Activated CD4-positive, alpha-beta T cell treated with anti-CD3 and anti-CD28 coated beads for 36 hours (primary cell): ENCODE measurements at regions of chr3 and their contacts with region 1.

Region 1: GRCh38 chr3:58433400-58434169 is at the start of gene PDHB:
- DNase-seq: peak; percentile 93
- ATAC-seq: peak; percentile 96
- H3K4me3 Mint-ChIP-seq: peak within 1 kb of the TSS; percentile 85
- H3K27ac Mint-ChIP-seq: peak within 1 kb of the TSS; percentile 96
- H3K4me1 Mint-ChIP-seq: peaks cover 24% of the 10 kb centered on the region
- H3K27me3 Mint-ChIP-seq: no peaks in the 10 kb centered on the region
- total RNA-seq, gene PDHB: 42.7 to 50.7 TPM

Region 2: DNA sequence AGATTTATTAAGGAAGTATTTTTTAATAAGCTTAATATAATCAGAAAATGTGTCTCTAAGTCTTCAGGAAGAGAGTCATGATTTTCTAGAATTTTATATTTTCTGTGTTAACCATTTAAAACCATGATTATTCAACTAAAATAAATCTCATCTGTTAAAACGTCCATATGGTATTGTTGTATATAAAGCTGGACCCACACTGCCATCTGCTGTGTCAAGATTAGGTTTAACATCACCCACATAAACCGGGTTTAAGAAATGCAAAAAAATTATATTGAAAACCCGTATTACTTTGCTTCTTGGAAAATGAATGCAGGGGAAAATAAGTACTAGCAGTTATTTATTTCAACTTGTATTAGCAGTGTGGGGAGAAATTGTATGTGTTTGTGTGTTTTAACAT is 1886.1 kb before region 1 on chr3:
- CTCF ChIA-PET with region 1: no interaction called
- POLR2A ChIA-PET with region 1: no interaction called
- intact Hi-C with region 1: no loop called
- DNase-seq: no peak
- ATAC-seq: no peak
- H3K4me3 Mint-ChIP-seq: no peak overlapping the region
- H3K27ac Mint-ChIP-seq: no peak overlapping the region
- H3K4me1 Mint-ChIP-seq: no peaks in the 10 kb centered on the region
- H3K27me3 Mint-ChIP-seq: peaks cover 7% of the 10 kb centered on the region

Region 3: GRCh38 chr3:57555738-57556458 is 877.7 kb before region 1 on chr3 and contains the start of gene PDE12:
- CTCF ChIA-PET with region 1: no interaction called
- POLR2A ChIA-PET with region 1: no interaction called
- intact Hi-C with region 1: loop called in 1 of 2 experiments (anchors 5 kb)
- DNase-seq: peak; percentile 91
- ATAC-seq: peak; percentile 82
- H3K4me3 Mint-ChIP-seq: peak within 1 kb of the TSS; percentile 91
- H3K27ac Mint-ChIP-seq: peak within 1 kb of the TSS; percentile 100
- H3K4me1 Mint-ChIP-seq: peaks cover 29% of the 10 kb centered on the region
- H3K27me3 Mint-ChIP-seq: no peaks in the 10 kb centered on the region
- total RNA-seq, gene PDE12: 19.2 to 19.9 TPM

Region 4: DNA sequence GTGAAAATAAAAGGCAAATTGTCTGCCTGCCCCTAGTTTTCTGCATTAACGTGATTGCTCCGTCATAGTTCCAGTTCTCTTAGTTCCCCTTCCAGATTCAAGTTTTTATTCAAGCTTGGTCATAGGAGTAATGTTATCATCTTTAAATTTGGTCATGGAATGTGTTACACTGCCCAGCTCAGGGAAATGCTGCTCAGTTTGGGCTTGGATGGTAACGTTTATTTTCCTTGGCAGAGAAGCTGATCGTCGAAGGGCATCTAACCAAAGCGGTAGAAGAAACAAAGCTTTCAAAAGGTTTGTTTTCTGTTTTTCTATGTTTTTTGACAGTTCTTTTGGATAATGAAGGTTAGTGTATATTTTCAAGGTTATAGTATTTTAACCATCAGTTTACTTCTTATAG is 543.8 kb before region 1 on chr3:
- CTCF ChIA-PET with region 1: no interaction called
- POLR2A ChIA-PET with region 1: no interaction called
- intact Hi-C with region 1: no loop called
- DNase-seq: no peak
- ATAC-seq: no peak
- H3K4me3 Mint-ChIP-seq: no peak overlapping the region
- H3K27ac Mint-ChIP-seq: no peak overlapping the region
- H3K4me1 Mint-ChIP-seq: no peaks in the 10 kb centered on the region
- H3K27me3 Mint-ChIP-seq: no peaks in the 10 kb centered on the region

Region 5: DNA sequence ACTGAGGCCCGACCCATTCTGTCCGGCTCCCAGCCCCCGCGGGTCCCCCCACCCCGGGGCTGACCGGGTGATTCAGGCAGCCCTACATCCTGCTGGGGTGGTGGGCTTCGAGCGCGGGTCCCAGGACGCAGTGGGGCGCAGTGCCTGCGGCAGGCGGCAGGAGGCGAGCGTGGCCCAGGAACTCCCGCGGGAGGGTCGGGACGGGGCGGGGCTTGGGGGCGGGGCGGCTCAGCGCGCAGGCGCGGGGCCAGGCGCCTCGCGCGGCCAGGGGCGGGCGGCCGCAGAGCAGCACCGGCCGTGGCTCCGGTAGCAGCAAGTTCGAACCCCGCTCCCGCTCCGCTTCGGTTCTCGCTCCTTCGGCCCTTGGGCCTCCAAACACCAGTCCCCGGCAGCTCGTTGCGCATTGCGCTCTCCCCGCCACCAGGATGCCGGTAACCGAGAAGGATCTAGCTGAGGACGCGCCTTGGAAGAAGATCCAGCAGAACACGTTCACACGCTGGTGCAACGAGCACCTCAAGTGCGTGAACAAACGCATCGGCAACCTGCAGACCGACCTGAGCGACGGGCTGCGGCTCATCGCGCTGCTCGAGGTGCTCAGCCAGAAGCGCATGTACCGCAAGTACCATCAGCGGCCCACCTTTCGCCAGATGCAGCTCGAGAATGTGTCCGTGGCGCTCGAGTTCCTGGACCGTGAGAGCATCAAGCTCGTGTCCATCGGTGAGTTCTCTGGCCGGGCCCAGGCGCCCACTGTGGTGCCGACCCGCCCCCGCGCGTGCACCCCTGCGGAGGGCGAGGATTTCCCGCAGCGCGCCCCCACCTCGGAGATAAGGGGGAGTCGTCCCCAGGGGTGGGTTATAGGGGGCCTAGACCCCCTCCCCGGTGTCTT is 425.2 kb before region 1 on chr3 and contains the start of gene FLNB:
- CTCF ChIA-PET with region 1: no interaction called
- POLR2A ChIA-PET with region 1: no interaction called
- intact Hi-C with region 1: loop called in 1 of 2 experiments (anchors 10 kb)
- DNase-seq: peak; percentile 91
- ATAC-seq: peak; percentile 80
- H3K4me3 Mint-ChIP-seq: peak within 1 kb of the TSS; percentile 88
- H3K27ac Mint-ChIP-seq: peak within 1 kb of the TSS; percentile 89
- H3K4me1 Mint-ChIP-seq: peaks cover 38% of the 10 kb centered on the region
- H3K27me3 Mint-ChIP-seq: no peaks in the 10 kb centered on the region
- total RNA-seq, gene FLNB: 25.4 to 29.1 TPM

Region 6: DNA sequence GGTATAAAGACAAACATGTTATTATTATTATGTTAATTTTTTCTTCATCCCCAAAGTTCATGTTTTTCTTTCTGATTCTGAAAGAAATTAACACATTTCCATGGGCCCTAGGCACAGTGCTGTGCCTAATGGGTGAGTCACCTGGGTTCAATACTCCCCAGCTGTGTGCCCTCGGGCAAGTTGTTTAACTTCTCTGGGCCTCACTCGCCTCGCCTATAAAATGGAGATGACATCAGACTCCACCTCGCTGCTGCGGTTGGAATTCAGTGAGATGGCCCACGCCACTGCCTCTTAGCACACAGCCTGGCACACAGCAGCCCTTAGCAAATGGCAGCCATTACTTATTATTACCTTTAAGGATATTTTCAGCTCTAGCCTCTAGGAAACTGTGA is 245.4 kb before region 1 on chr3:
- CTCF ChIA-PET with region 1: no interaction called
- POLR2A ChIA-PET with region 1: no interaction called
- intact Hi-C with region 1: loop called in 1 of 2 experiments (anchors 5 kb)
- DNase-seq: no peak
- ATAC-seq: peak; percentile 63
- H3K4me3 Mint-ChIP-seq: no peak overlapping the region
- H3K27ac Mint-ChIP-seq: no peak overlapping the region
- H3K4me1 Mint-ChIP-seq: no peaks in the 10 kb centered on the region
- H3K27me3 Mint-ChIP-seq: no peaks in the 10 kb centered on the region

Region 7: DNA sequence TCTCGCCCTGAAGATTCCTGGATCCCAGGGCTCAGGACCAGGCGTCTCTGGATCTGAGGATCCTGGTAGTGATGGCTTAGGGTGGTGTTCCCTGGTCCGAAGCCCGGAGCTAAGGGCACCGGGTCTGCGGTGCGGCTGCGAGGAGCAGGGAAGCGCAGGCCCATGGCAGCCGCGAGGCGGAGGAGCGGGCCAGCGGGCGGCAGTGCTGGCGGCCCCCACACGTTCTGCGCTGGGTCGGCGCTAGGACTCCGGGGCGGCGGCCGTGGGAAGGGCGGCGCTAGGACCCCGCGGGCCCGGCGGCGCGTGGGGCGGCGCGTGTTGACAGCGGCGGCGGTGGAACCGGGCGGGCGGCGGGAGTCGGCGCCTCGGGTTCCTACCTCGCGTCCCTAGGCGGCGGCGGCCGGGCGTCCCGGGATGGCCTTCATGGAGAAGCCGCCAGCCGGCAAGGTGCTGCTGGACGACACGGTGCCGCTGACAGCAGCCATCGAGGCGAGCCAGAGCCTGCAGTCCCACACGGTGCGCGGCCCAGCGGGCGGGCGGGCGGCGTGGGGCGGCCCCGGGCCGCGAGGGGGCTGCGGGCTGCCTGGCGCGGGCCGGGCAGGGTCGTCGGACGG is 100.9 kb before region 1 on chr3 and contains the start of gene PXK:
- CTCF ChIA-PET with region 1: no interaction called
- POLR2A ChIA-PET with region 1: no interaction called
- intact Hi-C with region 1: loop called in 1 of 2 experiments (anchors 1 kb)
- DNase-seq: peak; percentile 89
- ATAC-seq: peak; percentile 84
- H3K4me3 Mint-ChIP-seq: peak within 1 kb of the TSS; percentile 100
- H3K27ac Mint-ChIP-seq: peak within 1 kb of the TSS; percentile 96
- H3K4me1 Mint-ChIP-seq: peaks cover 30% of the 10 kb centered on the region
- H3K27me3 Mint-ChIP-seq: no peaks in the 10 kb centered on the region
- total RNA-seq, gene PXK: 35.2 to 50.7 TPM

Region 8: DNA sequence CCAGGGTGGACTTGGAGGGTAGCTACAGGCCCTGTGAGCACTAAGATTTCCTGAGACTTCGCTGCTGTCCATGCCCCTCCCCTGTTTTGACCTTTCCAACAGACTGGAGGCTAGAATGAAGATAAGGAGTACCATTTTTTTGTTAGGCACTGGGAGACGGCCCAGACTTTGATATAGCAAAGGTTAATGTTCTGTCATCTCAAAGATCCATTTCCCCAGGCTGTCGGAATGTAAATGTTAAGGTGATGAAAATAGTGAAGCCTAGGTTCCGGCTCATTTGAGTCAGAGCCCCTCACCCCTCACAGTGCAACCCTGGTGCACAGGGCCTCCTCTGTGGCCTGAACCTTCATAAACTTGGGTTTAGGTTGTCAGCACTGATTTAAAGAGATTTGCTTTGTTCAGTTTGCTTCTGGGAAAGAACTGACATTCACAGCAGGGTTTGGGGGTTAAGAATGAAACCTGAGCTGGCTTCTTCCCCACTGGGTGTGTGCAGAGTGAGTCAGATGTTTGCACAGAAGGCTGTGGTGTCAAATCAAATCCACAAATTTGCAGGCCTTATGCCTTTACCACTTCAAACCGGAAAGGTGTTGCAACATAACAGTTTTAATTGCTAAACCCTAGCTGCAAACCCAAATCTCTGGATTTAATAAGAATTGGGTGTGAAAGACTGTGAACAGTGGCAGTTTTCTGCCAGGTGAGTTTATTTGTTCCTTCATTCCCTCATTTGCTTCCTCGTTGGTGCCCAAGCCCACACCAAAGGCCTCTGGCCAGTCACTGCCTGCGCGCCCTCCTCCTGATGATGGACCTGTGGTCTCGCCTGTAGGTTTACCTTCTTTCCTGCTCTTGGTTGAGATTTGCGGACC is 37.7 kb after region 1 on chr3:
- CTCF ChIA-PET with region 1: interaction called, 3 read pairs
- POLR2A ChIA-PET with region 1: interaction called, 4 read pairs
- intact Hi-C with region 1: loop called in 1 of 2 experiments (anchors 1 kb)
- DNase-seq: peak; percentile 82
- ATAC-seq: peak; percentile 96
- H3K4me3 Mint-ChIP-seq: no peak overlapping the region
- H3K27ac Mint-ChIP-seq: peak overlapping the region; percentile 73
- H3K4me1 Mint-ChIP-seq: peaks cover 32% of the 10 kb centered on the region
- H3K27me3 Mint-ChIP-seq: peaks cover 2% of the 10 kb centered on the region

Region 9: GRCh38 chr3:58532794-58533220 is 99.2 kb after region 1 on chr3:
- CTCF ChIA-PET with region 1: interaction called, 3 read pairs
- POLR2A ChIA-PET with region 1: no interaction called
- intact Hi-C with region 1: loop called (anchors 1 to 2 kb)
- DNase-seq: peak; percentile 92
- ATAC-seq: peak; percentile 97
- H3K4me3 Mint-ChIP-seq: no peak overlapping the region
- H3K27ac Mint-ChIP-seq: peak overlapping the region; percentile 67
- H3K4me1 Mint-ChIP-seq: peaks cover 13% of the 10 kb centered on the region
- H3K27me3 Mint-ChIP-seq: no peaks in the 10 kb centered on the region